Dorsolateral prefrontal cortex (tissue), 120 donors: ENCODE measurements at regions of chr10 and their contacts with region 1.

Region 1: GRCh38 chr10:61024856-61025600 is 81.0 kb upstream of the RHOBTB1 start:
- DNase-seq: peak in 3 of 10 donors; percentile 27 to 52 (median 32)
- H3K4me3 ChIP-seq: no peak overlapping the region
- H3K27ac ChIP-seq: peak overlapping the region in 55 of 59 donors; percentile 1 to 84 (median 58)
- H3K27me3 ChIP-seq: no peaks in the 10 kb centered on the region
- CTCF ChIP-seq: peak; percentile 30 to 79 (median 62)

Region 2: DNA sequence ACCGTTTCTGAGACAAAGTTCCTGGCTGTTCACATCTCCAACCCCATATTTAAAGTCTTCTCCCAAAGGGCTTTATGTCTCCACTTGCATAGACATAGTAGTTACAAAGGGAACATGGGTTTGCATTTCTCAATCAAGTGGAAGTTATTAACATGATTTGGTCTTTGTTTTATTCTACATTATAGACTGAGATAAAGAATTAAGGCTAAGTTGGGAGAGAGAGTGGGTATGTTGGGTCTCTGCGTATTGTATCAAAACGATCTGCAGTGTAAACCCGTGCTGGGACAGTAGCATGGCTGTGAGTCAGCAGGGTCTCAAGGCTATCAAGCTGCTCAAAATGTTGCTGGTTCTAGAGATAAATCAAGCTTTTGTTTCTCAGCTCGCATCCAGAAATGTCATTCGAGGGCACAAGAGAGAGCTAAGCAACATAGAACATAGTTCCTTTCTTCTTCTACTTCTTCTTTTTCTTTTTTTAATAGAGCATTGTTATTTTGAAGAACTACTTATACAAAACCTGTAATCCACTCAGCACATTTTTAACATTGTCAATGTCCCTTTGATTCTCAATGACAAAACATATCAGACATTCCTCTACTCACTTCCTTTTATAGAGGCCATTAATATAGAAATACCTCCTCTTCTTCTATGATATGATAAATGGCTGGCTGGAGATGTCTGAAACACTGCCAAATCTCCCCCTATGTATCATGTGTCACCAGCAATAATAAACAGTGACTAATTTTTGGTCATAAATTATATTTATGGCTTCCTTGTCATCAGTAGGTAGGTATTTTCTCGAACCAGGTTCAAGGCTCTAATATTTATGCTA is 46.5 kb before region 1 on chr10:
- intact Hi-C with region 1: loop called in 1 of 2 experiments (anchors 10 kb)
- DNase-seq: peak in 1 of 10 donors; percentile 34
- H3K4me3 ChIP-seq: peak overlapping the region in 27 of 59 donors; percentile 1 to 46 (median 24)
- H3K27ac ChIP-seq: peak overlapping the region in 49 of 59 donors; percentile 2 to 89 (median 65)
- H3K27me3 ChIP-seq: no peaks in the 10 kb centered on the region
- CTCF ChIP-seq: peak in 1 of 56 donors; percentile 27

Region 3: GRCh38 chr10:61063034-61063433 is 38.0 kb after region 1 on chr10:
- intact Hi-C with region 1: no loop called
- DNase-seq: no peak
- H3K4me3 ChIP-seq: peak overlapping the region in 16 of 59 donors; percentile 1 to 46 (median 9)
- H3K27ac ChIP-seq: peak overlapping the region in 20 of 59 donors; percentile 2 to 59 (median 33)
- H3K27me3 ChIP-seq: no peaks in the 10 kb centered on the region
- CTCF ChIP-seq: no peak

Region 4: GRCh38 chr10:61097026-61097425 is 72.0 kb after region 1 on chr10:
- intact Hi-C with region 1: loop called in 1 of 2 experiments (anchors 5 kb)
- DNase-seq: no peak
- H3K4me3 ChIP-seq: no peak overlapping the region
- H3K27ac ChIP-seq: peak overlapping the region in 51 of 59 donors; percentile 21 to 96 (median 83)
- H3K27me3 ChIP-seq: no peaks in the 10 kb centered on the region
- CTCF ChIP-seq: no peak